MCF 10A (cell line): ENCODE measurements at regions of chr6 and their contacts with region 1.

Region 1: GRCh38 chr6:162538643-162539064 is 188.9 kb downstream of the PRKN start:
- DNase-seq: no peak
- H3K4me3 Mint-ChIP-seq: no peak overlapping the region
- H3K27ac Mint-ChIP-seq: no peak overlapping the region
- H3K4me1 Mint-ChIP-seq: no peaks in the 10 kb centered on the region
- H3K27me3 Mint-ChIP-seq: no peaks in the 10 kb centered on the region
- CTCF ChIP-seq: no peak

Region 2: DNA sequence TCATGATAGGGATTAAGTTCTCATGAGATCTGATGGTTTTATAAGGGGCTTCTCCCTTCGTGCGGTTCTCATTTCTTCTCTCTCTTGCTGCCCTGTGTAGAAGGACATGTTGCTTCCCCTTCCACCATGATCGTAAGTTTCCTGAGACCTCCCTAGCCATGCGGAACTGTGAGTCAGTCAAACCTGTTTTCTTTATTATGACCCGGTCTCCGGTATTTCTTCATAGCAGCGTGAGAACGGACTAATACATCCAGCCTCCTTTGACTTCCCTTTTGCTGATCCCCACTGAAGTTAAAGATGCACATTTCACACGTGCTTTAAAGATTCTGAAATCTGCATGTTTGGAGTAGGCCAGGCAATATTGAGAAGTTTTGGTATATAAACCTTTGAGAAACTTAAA is 354.2 kb before region 1 on chr6:
- CTCF ChIA-PET with region 1: no interaction called
- POLR2A ChIA-PET with region 1: no interaction called
- intact Hi-C with region 1: no loop called
- DNase-seq: no peak
- H3K4me3 Mint-ChIP-seq: no peak overlapping the region
- H3K27ac Mint-ChIP-seq: no peak overlapping the region
- H3K4me1 Mint-ChIP-seq: peaks cover 14% of the 10 kb centered on the region
- H3K27me3 Mint-ChIP-seq: no peaks in the 10 kb centered on the region
- CTCF ChIP-seq: no peak

Region 3: DNA sequence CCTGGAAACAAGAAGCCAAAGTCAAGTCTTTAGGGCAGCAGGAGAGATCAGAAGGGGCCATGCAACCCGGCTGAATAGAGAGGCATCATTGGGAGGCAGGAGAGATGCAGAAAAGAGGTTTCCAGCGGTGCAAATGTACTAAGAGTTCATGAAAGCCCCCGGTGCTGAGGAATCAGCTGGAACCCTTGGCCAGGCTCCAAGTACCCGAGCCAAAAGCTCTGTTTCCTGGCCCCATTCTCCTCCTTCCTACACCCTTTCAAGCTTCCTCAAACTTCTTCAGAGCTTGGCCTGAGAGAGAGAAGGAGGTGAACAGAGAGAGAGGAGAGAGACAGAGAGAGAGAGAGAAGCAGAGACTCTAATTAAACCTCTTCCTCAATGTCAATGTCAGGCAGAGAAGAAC is 244.6 kb before region 1 on chr6:
- CTCF ChIA-PET with region 1: no interaction called
- POLR2A ChIA-PET with region 1: no interaction called
- intact Hi-C with region 1: loop called (anchors 5 kb)
- DNase-seq: no peak
- H3K4me3 Mint-ChIP-seq: no peak overlapping the region
- H3K27ac Mint-ChIP-seq: no peak overlapping the region
- H3K4me1 Mint-ChIP-seq: peaks cover 6% of the 10 kb centered on the region
- H3K27me3 Mint-ChIP-seq: no peaks in the 10 kb centered on the region
- CTCF ChIP-seq: no peak